PC-9 (cell line): ENCODE measurements at regions of chr2 and their contacts with region 1.

Region 1: GRCh38 chr2:119753041-119753929 is 6.4 kb upstream of the PTPN4 start:
- DNase-seq: no peak
- H3K4me3 ChIP-seq: no peak overlapping the region
- H3K27ac ChIP-seq: no peak overlapping the region
- H3K4me1 ChIP-seq: peaks cover 16% of the 10 kb centered on the region
- H3K27me3 ChIP-seq: no peaks in the 10 kb centered on the region
- CTCF ChIP-seq: peak; percentile 73

Region 2: DNA sequence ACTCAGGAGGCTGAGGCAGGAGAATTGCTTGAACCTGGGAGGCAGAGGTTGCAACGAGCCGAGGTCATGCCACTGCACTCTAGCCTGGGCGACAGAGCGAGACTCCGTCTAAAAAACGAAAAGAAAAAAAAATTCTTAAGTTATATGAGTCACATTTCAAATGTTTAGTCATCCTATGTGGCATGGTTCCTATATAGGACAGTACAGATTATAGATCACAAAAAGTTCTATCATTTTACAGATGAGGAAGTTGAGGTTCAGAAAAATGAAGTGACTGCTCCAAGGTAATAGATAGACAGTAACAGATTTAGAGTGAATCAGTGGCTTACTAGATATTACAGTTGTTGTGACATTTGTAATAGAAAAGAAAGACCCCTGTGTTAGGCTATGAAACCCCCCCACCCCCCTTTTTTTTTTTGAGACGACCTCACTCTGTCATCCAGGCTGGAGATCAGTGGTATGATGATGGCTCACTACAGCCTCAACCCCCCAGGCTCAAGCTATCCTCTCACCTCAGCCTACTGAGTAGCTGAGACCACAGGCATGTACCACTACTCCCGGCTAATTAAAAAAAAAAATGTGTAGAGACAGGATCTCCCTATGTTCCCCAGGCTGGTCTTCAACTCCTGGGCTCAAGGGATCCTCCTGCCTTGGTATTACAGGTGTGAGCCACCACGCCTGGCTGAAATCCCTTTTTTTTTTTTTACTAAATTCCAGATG is 29.2 kb after region 1 on chr2:
- CTCF ChIA-PET with region 1: no interaction called
- POLR2A ChIA-PET with region 1: interaction called, 10 read pairs
- intact Hi-C with region 1: no loop called
- DNase-seq: no peak
- H3K4me3 ChIP-seq: no peak overlapping the region
- H3K27ac ChIP-seq: no peak overlapping the region
- H3K4me1 ChIP-seq: no peaks in the 10 kb centered on the region
- H3K27me3 ChIP-seq: no peaks in the 10 kb centered on the region
- CTCF ChIP-seq: no peak

Region 3: DNA sequence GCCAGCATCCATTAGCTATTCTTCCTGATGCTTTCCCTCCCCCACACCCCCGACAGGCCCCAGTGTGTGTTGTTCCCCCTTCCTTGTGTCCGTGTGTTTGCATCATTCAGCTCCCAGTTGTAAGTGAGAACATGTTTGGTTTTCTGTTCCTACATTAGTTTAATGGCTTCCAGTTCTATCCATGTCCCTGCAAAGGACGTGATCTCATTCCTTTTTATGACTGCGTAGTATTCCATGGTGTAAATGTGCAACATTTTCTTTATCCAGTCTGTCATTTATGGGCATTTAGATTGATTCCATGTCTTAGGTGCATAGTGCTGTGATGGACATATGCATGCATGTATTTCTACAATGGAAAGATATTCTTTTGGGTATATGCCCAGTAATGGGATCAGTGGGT is 365.2 kb after region 1 on chr2:
- CTCF ChIA-PET with region 1: interaction called, 15 read pairs
- POLR2A ChIA-PET with region 1: no interaction called
- intact Hi-C with region 1: no loop called
- DNase-seq: no peak
- H3K4me3 ChIP-seq: no peak overlapping the region
- H3K27ac ChIP-seq: no peak overlapping the region
- H3K4me1 ChIP-seq: no peaks in the 10 kb centered on the region
- H3K27me3 ChIP-seq: no peaks in the 10 kb centered on the region
- CTCF ChIP-seq: no peak